ENCODE measurements at regions of chr11 and their contacts with region 1.

Region 1: GRCh38 chr11:59429924-59430516 is 3.8 kb upstream of the OR5A2 start:
- DNase-seq: peak; percentile 45
- ATAC-seq: peak; percentile 83
- H3K4me3 Mint-ChIP-seq: no peak overlapping the region
- H3K27ac Mint-ChIP-seq: no peak overlapping the region
- H3K4me1 Mint-ChIP-seq: no peaks in the 10 kb centered on the region
- H3K27me3 Mint-ChIP-seq: peaks cover 6% of the 10 kb centered on the region

Region 2: GRCh38 chr11:59186130-59186594 is 243.9 kb before region 1 on chr11:
- CTCF ChIA-PET with region 1: interaction called, 11 read pairs
- POLR2A ChIA-PET with region 1: no interaction called
- intact Hi-C with region 1: no loop called
- DNase-seq: peak; percentile 75
- ATAC-seq: peak; percentile 85
- H3K4me3 Mint-ChIP-seq: no peak overlapping the region
- H3K27ac Mint-ChIP-seq: no peak overlapping the region
- H3K4me1 Mint-ChIP-seq: no peaks in the 10 kb centered on the region
- H3K27me3 Mint-ChIP-seq: no peaks in the 10 kb centered on the region

Region 3: GRCh38 chr11:59207988-59208451 is 222.0 kb before region 1 on chr11:
- CTCF ChIA-PET with region 1: interaction called, 10 read pairs
- POLR2A ChIA-PET with region 1: no interaction called
- intact Hi-C with region 1: no loop called
- DNase-seq: peak; percentile 52
- ATAC-seq: peak; percentile 78
- H3K4me3 Mint-ChIP-seq: no peak overlapping the region
- H3K27ac Mint-ChIP-seq: peak overlapping the region; percentile 17
- H3K4me1 Mint-ChIP-seq: peaks cover 32% of the 10 kb centered on the region
- H3K27me3 Mint-ChIP-seq: peaks cover 22% of the 10 kb centered on the region

Region 4: GRCh38 chr11:59283825-59284772 is 145.9 kb before region 1 on chr11:
- CTCF ChIA-PET with region 1: interaction called, 3 read pairs
- POLR2A ChIA-PET with region 1: no interaction called
- intact Hi-C with region 1: loop called (anchors 1 to 2 kb)
- DNase-seq: peak; percentile 63
- ATAC-seq: peak; percentile 81
- H3K4me3 Mint-ChIP-seq: peak overlapping the region; percentile 17
- H3K27ac Mint-ChIP-seq: no peak overlapping the region
- H3K4me1 Mint-ChIP-seq: peaks cover 14% of the 10 kb centered on the region
- H3K27me3 Mint-ChIP-seq: peaks cover 9% of the 10 kb centered on the region

Region 5: GRCh38 chr11:59680287-59681154 is 250.5 kb after region 1 on chr11:
- CTCF ChIA-PET with region 1: no interaction called
- POLR2A ChIA-PET with region 1: no interaction called
- intact Hi-C with region 1: loop called in 1 of 2 experiments (anchors 5 kb)
- DNase-seq: peak; percentile 73
- ATAC-seq: peak; percentile 92
- H3K4me3 Mint-ChIP-seq: no peak overlapping the region
- H3K27ac Mint-ChIP-seq: no peak overlapping the region
- H3K4me1 Mint-ChIP-seq: peaks cover 10% of the 10 kb centered on the region
- H3K27me3 Mint-ChIP-seq: peaks cover 16% of the 10 kb centered on the region

Measured in activated CD4-positive, alpha-beta T cell treated with anti-CD3 and anti-CD28 coated beads for 36 hours (primary cell).